HepG2 (cell line): ENCODE measurements at regions of chr3 and their contacts with region 1.

Region 1: GRCh38 chr3:174821477-174821876 is 37.7 kb upstream of the NAALADL2 start:
- DNase-seq: no peak
- ATAC-seq: no peak
- H3K4me3 ChIP-seq: no peak overlapping the region
- H3K27ac ChIP-seq: no peak overlapping the region
- H3K4me1 ChIP-seq: no peaks in the 10 kb centered on the region
- H3K27me3 ChIP-seq: no peaks in the 10 kb centered on the region; a peak in 1 of 5 replicates
- CTCF ChIP-seq: no peak
- EP300 ChIP-seq: no peak
- POLR2A ChIP-seq: no peak
- RAD21 ChIP-seq: no peak

Region 2: GRCh38 chr3:174229916-174230315 is 591.6 kb before region 1 on chr3:
- CTCF ChIA-PET with region 1: no interaction called
- POLR2A ChIA-PET with region 1: no interaction called
- in situ Hi-C with region 1: no loop called
- intact Hi-C with region 1: no loop called
- DNase-seq: no peak
- ATAC-seq: no peak
- H3K4me3 ChIP-seq: no peak overlapping the region
- H3K27ac ChIP-seq: no peak overlapping the region
- H3K4me1 ChIP-seq: no peaks in the 10 kb centered on the region
- H3K27me3 ChIP-seq: no peaks in the 10 kb centered on the region
- CTCF ChIP-seq: no peak
- EP300 ChIP-seq: no peak
- POLR2A ChIP-seq: no peak
- RAD21 ChIP-seq: no peak

Region 3: GRCh38 chr3:175057401-175057800 is 235.9 kb after region 1 on chr3:
- CTCF ChIA-PET with region 1: no interaction called
- POLR2A ChIA-PET with region 1: no interaction called
- in situ Hi-C with region 1: no loop called
- intact Hi-C with region 1: loop called (anchors 5 kb)
- DNase-seq: no peak
- ATAC-seq: no peak
- H3K4me3 ChIP-seq: no peak overlapping the region
- H3K27ac ChIP-seq: no peak overlapping the region
- H3K4me1 ChIP-seq: no peaks in the 10 kb centered on the region
- H3K27me3 ChIP-seq: no peaks in the 10 kb centered on the region
- CTCF ChIP-seq: no peak
- EP300 ChIP-seq: no peak
- POLR2A ChIP-seq: no peak
- RAD21 ChIP-seq: no peak

Region 4: GRCh38 chr3:175153595-175153994 is 332.1 kb after region 1 on chr3:
- CTCF ChIA-PET with region 1: no interaction called
- POLR2A ChIA-PET with region 1: no interaction called
- in situ Hi-C with region 1: no loop called
- intact Hi-C with region 1: no loop called
- DNase-seq: no peak
- ATAC-seq: no peak
- H3K4me3 ChIP-seq: no peak overlapping the region
- H3K27ac ChIP-seq: no peak overlapping the region
- H3K4me1 ChIP-seq: no peaks in the 10 kb centered on the region
- H3K27me3 ChIP-seq: no peaks in the 10 kb centered on the region; a peak in 1 of 5 replicates
- CTCF ChIP-seq: no peak
- EP300 ChIP-seq: no peak
- POLR2A ChIP-seq: no peak
- RAD21 ChIP-seq: no peak

Region 5: GRCh38 chr3:175163686-175164085 is 342.2 kb after region 1 on chr3:
- CTCF ChIA-PET with region 1: no interaction called
- POLR2A ChIA-PET with region 1: no interaction called
- in situ Hi-C with region 1: no loop called
- intact Hi-C with region 1: no loop called
- DNase-seq: no peak
- ATAC-seq: no peak
- H3K4me3 ChIP-seq: no peak overlapping the region
- H3K27ac ChIP-seq: no peak overlapping the region
- H3K4me1 ChIP-seq: no peaks in the 10 kb centered on the region
- H3K27me3 ChIP-seq: no peaks in the 10 kb centered on the region
- CTCF ChIP-seq: no peak
- EP300 ChIP-seq: no peak
- POLR2A ChIP-seq: no peak
- RAD21 ChIP-seq: no peak